Ovary (tissue), 10 donors: ENCODE measurements at regions of chr15 and their contacts with region 1.

Region 1: GRCh38 chr15:47857776-47858167 is 140.5 kb downstream of the SEMA6D start:
- DNase-seq: no peak
- H3K4me3 ChIP-seq: no peak overlapping the region
- H3K27ac ChIP-seq: no peak overlapping the region
- H3K4me1 ChIP-seq: peaks cover 2% of the 10 kb centered on the region
- H3K27me3 ChIP-seq: no peaks in the 10 kb centered on the region
- CTCF ChIP-seq: no peak
- EP300 ChIP-seq: no peak
- POLR2A ChIP-seq: no peak

Region 2: GRCh38 chr15:47412136-47412535 is 445.6 kb before region 1 on chr15:
- intact Hi-C with region 1: loop called in 1 of 4 experiments (anchors 2 kb)
- DNase-seq: no peak
- H3K4me3 ChIP-seq: no peak overlapping the region
- H3K27ac ChIP-seq: no peak overlapping the region
- H3K4me1 ChIP-seq: peaks cover 6% of the 10 kb centered on the region
- H3K27me3 ChIP-seq: no peaks in the 10 kb centered on the region
- CTCF ChIP-seq: no peak
- EP300 ChIP-seq: no peak
- POLR2A ChIP-seq: no peak

Region 3: GRCh38 chr15:47803767-47804166 is 54.0 kb before region 1 on chr15:
- intact Hi-C with region 1: no loop called
- DNase-seq: no peak
- H3K4me3 ChIP-seq: no peak overlapping the region
- H3K27ac ChIP-seq: no peak overlapping the region
- H3K4me1 ChIP-seq: no peaks in the 10 kb centered on the region
- H3K27me3 ChIP-seq: no peaks in the 10 kb centered on the region
- CTCF ChIP-seq: no peak
- EP300 ChIP-seq: no peak
- POLR2A ChIP-seq: no peak